ENCODE measurements at regions of chr9 and their contacts with region 1.

Region 1: GRCh38 chr9:86238861-86239770 is 20.3 kb downstream of the C9orf153 start:
- DNase-seq: no peak
- H3K4me3 Mint-ChIP-seq: no peak overlapping the region
- H3K27ac Mint-ChIP-seq: no peak overlapping the region
- H3K4me1 Mint-ChIP-seq: no peaks in the 10 kb centered on the region
- H3K27me3 Mint-ChIP-seq: peaks cover 12% of the 10 kb centered on the region
- CTCF ChIP-seq: peak; percentile 19

Region 2: GRCh38 chr9:85741875-85742629 is 497.1 kb before region 1 on chr9 and contains the start of gene AGTPBP1:
- CTCF ChIA-PET with region 1: no interaction called
- POLR2A ChIA-PET with region 1: no interaction called
- intact Hi-C with region 1: no loop called
- DNase-seq: peak; percentile 94
- H3K4me3 Mint-ChIP-seq: peak within 1 kb of the TSS; percentile 83
- H3K27ac Mint-ChIP-seq: peak within 1 kb of the TSS; percentile 96
- H3K4me1 Mint-ChIP-seq: peaks cover 15% of the 10 kb centered on the region
- H3K27me3 Mint-ChIP-seq: peaks cover 14% of the 10 kb centered on the region
- CTCF ChIP-seq: no peak
- total RNA-seq, gene AGTPBP1: 27.2 and 30.8 TPM in 2 replicates

Region 3: GRCh38 chr9:86034863-86035734 is 204.0 kb before region 1 on chr9:
- CTCF ChIA-PET with region 1: interaction called, 4 read pairs
- POLR2A ChIA-PET with region 1: no interaction called
- intact Hi-C with region 1: loop called (anchors 1 kb)
- DNase-seq: peak; percentile 53
- H3K4me3 Mint-ChIP-seq: no peak overlapping the region
- H3K27ac Mint-ChIP-seq: no peak overlapping the region
- H3K4me1 Mint-ChIP-seq: no peaks in the 10 kb centered on the region
- H3K27me3 Mint-ChIP-seq: no peaks in the 10 kb centered on the region
- CTCF ChIP-seq: peak; percentile 48

Region 4: GRCh38 chr9:86222667-86223066 is 16.4 kb before region 1 on chr9:
- CTCF ChIA-PET with region 1: interaction called, 16 read pairs
- POLR2A ChIA-PET with region 1: interaction called, 3 read pairs
- intact Hi-C with region 1: no loop called
- DNase-seq: no peak
- H3K4me3 Mint-ChIP-seq: no peak overlapping the region
- H3K27ac Mint-ChIP-seq: no peak overlapping the region
- H3K4me1 Mint-ChIP-seq: no peaks in the 10 kb centered on the region
- H3K27me3 Mint-ChIP-seq: no peaks in the 10 kb centered on the region
- CTCF ChIP-seq: no peak